ENCODE measurements at regions of chr1 and their contacts with region 1.

Region 1: GRCh38 chr1:62407405-62408009 is 29.3 kb upstream of the USP1 start:
- DNase-seq: peak; percentile 24
- H3K4me3 ChIP-seq: no peak overlapping the region
- H3K27ac ChIP-seq: no peak overlapping the region
- H3K4me1 ChIP-seq: no peaks in the 10 kb centered on the region
- H3K27me3 ChIP-seq: no peaks in the 10 kb centered on the region
- CTCF ChIP-seq: peak; percentile 64 to 74 (median 65)
- POLR2A ChIP-seq: no peak

Region 2: GRCh38 chr1:62175568-62176179 is 231.8 kb before region 1 on chr1:
- intact Hi-C with region 1: loop called (anchors 5 kb)
- DNase-seq: peak; percentile 65
- H3K4me3 ChIP-seq: no peak overlapping the region
- H3K27ac ChIP-seq: no peak overlapping the region
- H3K4me1 ChIP-seq: no peaks in the 10 kb centered on the region
- H3K27me3 ChIP-seq: no peaks in the 10 kb centered on the region
- CTCF ChIP-seq: peak; percentile 63 to 78 (median 71)
- POLR2A ChIP-seq: no peak

Region 3: GRCh38 chr1:62544570-62544969 is 137.1 kb after region 1 on chr1:
- intact Hi-C with region 1: no loop called
- DNase-seq: no peak
- H3K4me3 ChIP-seq: no peak overlapping the region
- H3K27ac ChIP-seq: no peak overlapping the region
- H3K4me1 ChIP-seq: no peaks in the 10 kb centered on the region
- H3K27me3 ChIP-seq: no peaks in the 10 kb centered on the region
- CTCF ChIP-seq: no peak
- POLR2A ChIP-seq: no peak